MCF 10A (cell line): ENCODE measurements at regions of chr17 and their contacts with region 1.

Region 1: GRCh38 chr17:49997791-49998703 is 3.0 kb upstream of the DLX3 start:
- DNase-seq: peak; percentile 94
- H3K4me3 Mint-ChIP-seq: peak overlapping the region; percentile 11
- H3K27ac Mint-ChIP-seq: no peak overlapping the region
- H3K4me1 Mint-ChIP-seq: peaks cover 24% of the 10 kb centered on the region
- H3K27me3 Mint-ChIP-seq: peaks cover 80% of the 10 kb centered on the region
- CTCF ChIP-seq: peak; percentile 93

Region 2: GRCh38 chr17:49634485-49634860 is 363.6 kb before region 1 on chr17:
- CTCF ChIA-PET with region 1: no interaction called
- POLR2A ChIA-PET with region 1: no interaction called
- intact Hi-C with region 1: no loop called
- DNase-seq: no peak
- H3K4me3 Mint-ChIP-seq: no peak overlapping the region
- H3K27ac Mint-ChIP-seq: no peak overlapping the region
- H3K4me1 Mint-ChIP-seq: peaks cover 4% of the 10 kb centered on the region
- H3K27me3 Mint-ChIP-seq: no peaks in the 10 kb centered on the region
- CTCF ChIP-seq: no peak

Region 3: GRCh38 chr17:49707608-49708514 is 290.2 kb before region 1 on chr17 and contains the start of gene SLC35B1:
- CTCF ChIA-PET with region 1: interaction called, 6 read pairs
- POLR2A ChIA-PET with region 1: no interaction called
- intact Hi-C with region 1: loop called (anchors 5 kb)
- DNase-seq: peak; percentile 99
- H3K4me3 Mint-ChIP-seq: peak within 1 kb of the TSS; percentile 83
- H3K27ac Mint-ChIP-seq: peak within 1 kb of the TSS; percentile 100
- H3K4me1 Mint-ChIP-seq: peaks cover 23% of the 10 kb centered on the region
- H3K27me3 Mint-ChIP-seq: no peaks in the 10 kb centered on the region
- CTCF ChIP-seq: peak; percentile 62
- total RNA-seq, gene SLC35B1: 99.6 and 130 TPM in 2 replicates

Region 4: GRCh38 chr17:49861150-49861892 is 136.7 kb before region 1 on chr17:
- CTCF ChIA-PET with region 1: interaction called, 236 read pairs
- POLR2A ChIA-PET with region 1: interaction called, 4 read pairs
- intact Hi-C with region 1: loop called (anchors 1 kb)
- DNase-seq: peak; percentile 65
- H3K4me3 Mint-ChIP-seq: no peak overlapping the region
- H3K27ac Mint-ChIP-seq: no peak overlapping the region
- H3K4me1 Mint-ChIP-seq: no peaks in the 10 kb centered on the region
- H3K27me3 Mint-ChIP-seq: no peaks in the 10 kb centered on the region
- CTCF ChIP-seq: peak; percentile 89

Region 5: DNA sequence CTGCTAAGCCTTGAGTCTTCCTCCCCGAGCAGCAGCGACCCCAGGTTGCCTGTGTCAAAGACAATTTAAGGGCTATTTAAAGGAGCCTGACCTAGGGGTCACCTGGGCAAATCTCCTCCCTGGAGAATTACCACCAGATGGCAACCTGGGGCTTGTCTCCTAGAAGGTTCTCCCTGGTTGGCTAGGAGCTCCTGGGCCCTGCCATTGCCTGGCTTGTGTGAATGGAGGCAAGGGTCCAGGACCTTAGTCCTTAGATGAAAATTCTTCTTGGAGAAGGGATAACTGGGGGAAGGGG is 98.9 kb before region 1 on chr17:
- CTCF ChIA-PET with region 1: interaction called, 43 read pairs
- POLR2A ChIA-PET with region 1: interaction called, 5 read pairs
- intact Hi-C with region 1: no loop called
- DNase-seq: peak; percentile 36
- H3K4me3 Mint-ChIP-seq: no peak overlapping the region
- H3K27ac Mint-ChIP-seq: no peak overlapping the region
- H3K4me1 Mint-ChIP-seq: peaks cover 6% of the 10 kb centered on the region
- H3K27me3 Mint-ChIP-seq: peaks cover 24% of the 10 kb centered on the region
- CTCF ChIP-seq: peak; percentile 21

Region 6: GRCh38 chr17:49952209-49952911 is 45.7 kb before region 1 on chr17:
- CTCF ChIA-PET with region 1: interaction called, 241 read pairs
- POLR2A ChIA-PET with region 1: interaction called, 12 read pairs
- intact Hi-C with region 1: loop called (anchors 1 kb)
- DNase-seq: peak; percentile 86
- H3K4me3 Mint-ChIP-seq: no peak overlapping the region
- H3K27ac Mint-ChIP-seq: no peak overlapping the region
- H3K4me1 Mint-ChIP-seq: peaks cover 5% of the 10 kb centered on the region
- H3K27me3 Mint-ChIP-seq: peaks cover 44% of the 10 kb centered on the region
- CTCF ChIP-seq: peak; percentile 80

Region 7: GRCh38 chr17:50009282-50009681 is 11.2 kb after region 1 on chr17:
- CTCF ChIA-PET with region 1: interaction called, 24 read pairs
- POLR2A ChIA-PET with region 1: interaction called, 3 read pairs
- intact Hi-C with region 1: no loop called
- DNase-seq: no peak
- H3K4me3 Mint-ChIP-seq: no peak overlapping the region
- H3K27ac Mint-ChIP-seq: no peak overlapping the region
- H3K4me1 Mint-ChIP-seq: no peaks in the 10 kb centered on the region
- H3K27me3 Mint-ChIP-seq: peaks cover 19% of the 10 kb centered on the region
- CTCF ChIP-seq: no peak

Region 8: GRCh38 chr17:50026046-50026675 is 28.1 kb after region 1 on chr17:
- CTCF ChIA-PET with region 1: no interaction called
- POLR2A ChIA-PET with region 1: no interaction called
- intact Hi-C with region 1: no loop called
- DNase-seq: no peak
- H3K4me3 Mint-ChIP-seq: no peak overlapping the region
- H3K27ac Mint-ChIP-seq: no peak overlapping the region
- H3K4me1 Mint-ChIP-seq: peaks cover 28% of the 10 kb centered on the region
- H3K27me3 Mint-ChIP-seq: peaks cover 8% of the 10 kb centered on the region
- CTCF ChIP-seq: no peak

Region 9: DNA sequence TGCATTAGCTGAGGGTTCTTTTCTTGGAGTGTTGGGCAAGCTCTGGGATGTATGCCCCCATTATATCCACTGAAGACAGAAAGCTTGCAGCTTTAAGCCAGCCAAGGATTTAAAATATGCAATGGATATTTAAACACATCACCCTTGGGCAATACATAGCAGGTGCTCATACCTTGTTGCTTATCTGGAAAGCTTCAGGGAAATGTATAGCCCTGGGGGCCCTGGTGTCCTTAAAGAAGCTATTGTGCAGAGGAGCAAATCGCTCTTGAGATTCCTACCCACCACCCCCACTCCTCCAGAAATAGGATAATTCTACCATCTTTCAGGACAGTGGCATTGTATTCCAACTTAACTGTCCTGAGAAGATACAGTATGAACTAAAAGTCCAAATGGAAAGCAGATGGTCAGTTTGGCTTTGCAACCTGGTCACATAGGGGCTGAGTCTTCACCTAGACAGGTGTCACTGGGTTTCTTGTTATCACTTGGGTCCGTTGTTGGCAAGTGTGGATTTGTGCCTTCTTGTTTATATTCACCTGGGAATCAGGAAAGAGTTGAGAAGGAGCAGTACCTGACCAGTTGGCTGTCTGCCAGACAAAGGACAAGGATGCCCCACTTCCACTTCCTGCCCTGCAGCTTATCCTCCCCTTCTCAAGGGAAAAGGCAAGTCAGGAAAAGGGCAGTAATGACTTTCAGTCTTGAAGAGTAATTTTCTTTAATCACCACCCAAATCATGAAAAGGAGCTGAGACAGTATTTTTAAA is 765.8 kb after region 1 on chr17:
- CTCF ChIA-PET with region 1: no interaction called
- POLR2A ChIA-PET with region 1: no interaction called
- intact Hi-C with region 1: no loop called
- DNase-seq: no peak
- H3K4me3 Mint-ChIP-seq: no peak overlapping the region
- H3K27ac Mint-ChIP-seq: no peak overlapping the region
- H3K4me1 Mint-ChIP-seq: peaks cover 13% of the 10 kb centered on the region
- H3K27me3 Mint-ChIP-seq: no peaks in the 10 kb centered on the region
- CTCF ChIP-seq: no peak